Dorsolateral prefrontal cortex (tissue), 120 donors: ENCODE measurements at regions of chr7 and their contacts with region 1.

Region 1: DNA sequence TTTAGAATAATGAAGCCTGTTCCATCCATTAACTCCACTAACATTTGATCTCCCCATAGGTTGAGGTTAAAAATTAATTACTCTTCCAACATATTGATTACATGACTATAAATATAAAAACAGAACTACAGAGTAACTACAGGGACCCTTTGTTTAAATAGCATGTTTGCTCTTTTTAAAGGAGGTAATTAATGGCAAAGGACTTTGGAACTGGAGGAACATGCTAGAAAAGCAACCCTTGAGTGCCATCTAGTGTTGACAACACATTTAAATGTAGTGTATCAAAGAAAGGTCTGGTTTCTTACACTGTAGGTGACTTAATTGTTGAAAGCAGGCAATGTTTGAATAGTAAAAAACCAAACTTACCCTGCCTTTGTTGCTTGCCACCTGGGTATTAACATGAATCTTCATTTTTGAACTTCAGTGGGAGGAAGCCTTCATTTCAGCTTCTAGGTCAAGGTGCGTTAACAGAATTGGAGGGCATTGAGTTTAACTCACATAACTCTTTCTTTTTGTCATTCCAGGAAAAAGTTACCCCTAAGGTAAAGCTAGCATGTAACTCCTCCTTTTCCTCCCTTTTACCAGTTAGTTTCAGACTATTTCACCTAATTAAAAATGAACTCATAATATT is 52.6 kb upstream of the CAPZA2 start:
- DNase-seq: peak in 1 of 10 donors; percentile 14
- H3K4me3 ChIP-seq: no peak overlapping the region
- H3K27ac ChIP-seq: peak overlapping the region in 2 of 59 donors; percentile 19 to 44
- H3K27me3 ChIP-seq: no peaks in the 10 kb centered on the region
- CTCF ChIP-seq: peak; percentile 47 to 94 (median 80)

Region 2: DNA sequence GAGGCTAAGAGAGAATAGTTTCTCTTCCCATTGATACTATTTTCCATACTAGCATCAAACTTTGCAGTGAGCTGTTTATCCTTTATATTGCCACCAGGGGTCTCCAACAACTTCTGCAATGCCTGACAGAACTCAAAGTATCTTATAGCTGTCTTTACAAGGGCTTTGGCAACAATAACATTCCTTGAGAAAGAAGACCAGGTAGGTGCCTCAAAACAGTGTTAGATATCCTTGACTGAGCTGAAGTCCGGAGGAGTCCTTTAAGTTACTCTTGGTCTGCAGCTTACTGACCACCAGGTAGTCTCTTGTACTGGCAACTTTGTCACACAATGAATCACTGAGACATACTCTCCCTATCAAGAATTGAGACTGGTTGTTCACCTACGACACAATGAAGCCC is 629.4 kb before region 1 on chr7:
- intact Hi-C with region 1: loop called in 1 of 2 experiments (anchors 10 kb)
- DNase-seq: no peak
- H3K4me3 ChIP-seq: no peak overlapping the region
- H3K27ac ChIP-seq: no peak overlapping the region
- H3K27me3 ChIP-seq: peaks cover 0 to 2% (median 0%) of the 10 kb centered on the region in 45 donors
- CTCF ChIP-seq: peak in 53 of 56 donors; percentile 30 to 70 (median 48)

Region 3: DNA sequence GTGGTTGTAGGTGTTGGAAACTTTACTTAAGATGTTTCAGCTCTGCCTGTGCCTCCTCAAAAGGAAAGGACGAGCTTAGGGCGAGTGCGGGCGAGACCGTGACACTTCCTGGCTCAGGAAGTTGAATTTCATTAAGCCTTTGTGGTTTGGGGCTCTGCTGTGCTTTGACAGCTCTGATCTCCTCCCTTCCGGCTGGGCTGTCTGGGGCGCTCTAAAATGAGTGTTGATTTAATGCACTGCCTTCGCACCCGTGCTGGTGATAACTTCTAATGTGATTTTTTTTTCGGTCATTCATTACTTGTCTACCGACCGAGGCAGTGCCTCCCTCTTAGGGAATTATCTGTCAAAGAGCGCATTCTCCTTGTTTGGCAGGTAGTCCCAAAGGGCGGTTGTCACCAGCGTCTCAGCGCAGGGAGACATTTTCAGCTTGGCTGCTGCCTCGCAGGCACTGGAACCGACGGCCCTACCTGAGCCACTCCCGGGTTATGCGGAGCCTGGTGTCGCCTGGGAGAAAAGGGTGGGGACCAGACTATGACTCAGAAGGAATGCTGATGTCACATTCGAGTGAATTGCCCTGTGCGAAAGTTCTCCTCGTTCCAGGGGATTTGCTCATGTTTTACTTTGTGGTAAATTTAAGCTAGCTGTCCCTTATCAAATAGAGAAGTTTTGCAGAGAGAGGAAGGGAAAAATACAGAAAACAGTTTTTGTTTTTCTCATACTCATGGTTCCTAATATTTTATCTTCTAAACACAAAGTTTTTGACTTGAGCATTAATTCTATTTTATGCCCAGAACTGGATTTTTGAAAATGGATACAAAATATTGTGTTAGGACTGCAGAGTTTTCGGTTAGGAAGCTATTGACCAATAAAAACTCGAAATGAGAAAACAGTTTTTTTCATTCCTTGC is 598.5 kb before region 1 on chr7:
- intact Hi-C with region 1: no loop called
- DNase-seq: no peak
- H3K4me3 ChIP-seq: peak overlapping the region; percentile 25 to 72 (median 52)
- H3K27ac ChIP-seq: peak overlapping the region in 34 of 59 donors; percentile 4 to 80 (median 46)
- H3K27me3 ChIP-seq: peaks cover 0 to 67% (median 48%) of the 10 kb centered on the region in 45 donors
- CTCF ChIP-seq: no peak

Region 4: GRCh38 chr7:116249708-116250553 is 559.8 kb before region 1 on chr7:
- intact Hi-C with region 1: loop called in 1 of 2 experiments (anchors 5 kb)
- DNase-seq: no peak
- H3K4me3 ChIP-seq: no peak overlapping the region
- H3K27ac ChIP-seq: no peak overlapping the region
- H3K27me3 ChIP-seq: peaks cover 0 to under 1% (median 0%) of the 10 kb centered on the region in 45 donors
- CTCF ChIP-seq: peak in 42 of 56 donors; percentile 10 to 50 (median 29)

Region 5: DNA sequence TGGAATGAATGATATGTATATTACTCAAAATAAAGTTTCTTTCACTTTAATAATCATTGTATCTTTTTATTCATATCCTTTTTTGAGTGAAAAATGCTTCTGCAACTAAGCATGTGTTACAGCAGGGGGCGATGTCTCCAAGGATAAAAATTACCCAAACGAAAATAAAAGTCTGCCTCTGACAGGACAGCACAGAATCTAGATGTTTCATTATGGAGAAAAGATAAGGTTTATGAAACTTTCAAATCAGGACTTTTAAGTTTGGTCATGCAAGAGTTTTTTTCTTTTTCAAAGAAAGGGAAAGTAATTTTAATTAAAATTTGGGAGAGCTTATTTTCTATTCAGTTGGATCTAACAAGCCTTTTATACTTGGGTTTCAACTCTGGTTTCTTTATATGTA is 551.0 kb before region 1 on chr7:
- intact Hi-C with region 1: loop called (anchors 2 to 5 kb)
- DNase-seq: peak in 1 of 10 donors; percentile 18
- H3K4me3 ChIP-seq: no peak overlapping the region
- H3K27ac ChIP-seq: no peak overlapping the region
- H3K27me3 ChIP-seq: peaks cover 0 to 3% (median 0%) of the 10 kb centered on the region in 45 donors
- CTCF ChIP-seq: peak; percentile 85 to 99 (median 93)

Region 6: DNA sequence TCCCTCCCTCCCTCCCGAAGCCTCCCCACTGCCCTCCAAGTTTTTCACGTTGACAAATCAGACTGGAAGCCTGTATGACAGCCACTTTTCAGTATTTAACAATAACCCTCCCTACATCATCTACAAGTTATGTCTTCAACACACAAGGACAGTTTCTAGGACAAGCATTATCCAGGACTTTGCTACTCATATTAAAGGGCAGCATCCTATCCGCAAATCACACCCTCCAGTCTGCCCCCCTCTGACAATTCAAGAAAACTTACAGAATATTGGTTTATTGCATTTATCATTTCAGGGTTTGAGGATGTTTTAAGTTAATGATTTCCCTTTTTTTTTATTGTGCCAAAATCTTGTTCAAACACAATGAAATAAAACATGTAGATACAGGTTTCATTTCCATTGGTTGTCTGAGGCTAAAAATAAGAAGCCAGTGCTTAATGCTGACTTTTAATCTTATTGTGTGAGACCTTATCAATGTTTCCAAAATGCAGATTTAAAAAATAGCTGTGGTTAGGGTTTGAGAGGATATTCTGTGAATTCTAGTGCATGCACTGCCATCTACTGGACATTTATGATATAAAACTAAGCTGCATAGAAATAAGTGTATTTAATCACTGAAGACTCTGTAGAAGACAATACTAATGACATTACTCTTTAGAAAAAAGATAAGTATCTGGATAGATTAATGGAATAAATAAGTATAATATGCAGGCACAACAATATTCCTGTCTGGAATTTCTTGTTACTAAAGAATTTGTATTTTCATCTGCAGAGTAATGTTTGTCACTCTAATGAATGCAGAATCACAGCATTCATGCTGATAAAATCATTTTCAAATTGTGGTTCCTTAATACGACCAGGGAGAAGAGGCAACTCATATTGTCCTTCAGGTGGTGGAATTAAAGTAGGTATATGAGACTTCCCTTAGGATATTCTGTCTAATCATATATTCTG is 220.8 kb before region 1 on chr7:
- intact Hi-C with region 1: loop called in 1 of 2 experiments (anchors 2 kb)
- DNase-seq: no peak
- H3K4me3 ChIP-seq: no peak overlapping the region
- H3K27ac ChIP-seq: peak overlapping the region in 1 of 59 donors; percentile 12
- H3K27me3 ChIP-seq: no peaks in the 10 kb centered on the region
- CTCF ChIP-seq: peak; percentile 73 to 98 (median 85)

Region 7: GRCh38 chr7:116598278-116598677 is 211.5 kb before region 1 on chr7:
- intact Hi-C with region 1: loop called (anchors 2 kb)
- DNase-seq: peak in 6 of 10 donors; percentile 24 to 45 (median 32)
- H3K4me3 ChIP-seq: peak overlapping the region in 4 of 59 donors; percentile 6 to 38 (median 34)
- H3K27ac ChIP-seq: peak overlapping the region in 51 of 59 donors; percentile 3 to 92 (median 70)
- H3K27me3 ChIP-seq: peaks cover 0 to 5% (median 0%) of the 10 kb centered on the region in 45 donors
- CTCF ChIP-seq: peak in 46 of 56 donors; percentile 11 to 69 (median 44)

Region 8: GRCh38 chr7:116772423-116772863 is 37.3 kb before region 1 on chr7:
- intact Hi-C with region 1: no loop called
- DNase-seq: no peak
- H3K4me3 ChIP-seq: no peak overlapping the region
- H3K27ac ChIP-seq: no peak overlapping the region
- H3K27me3 ChIP-seq: peaks cover 0 to 4% (median 0%) of the 10 kb centered on the region in 45 donors
- CTCF ChIP-seq: no peak

Region 9: GRCh38 chr7:116899308-116899707 is 89.6 kb after region 1 on chr7:
- intact Hi-C with region 1: no loop called
- DNase-seq: no peak
- H3K4me3 ChIP-seq: no peak overlapping the region
- H3K27ac ChIP-seq: peak overlapping the region in 10 of 59 donors; percentile 7 to 67 (median 23)
- H3K27me3 ChIP-seq: no peaks in the 10 kb centered on the region
- CTCF ChIP-seq: no peak

Region 10: GRCh38 chr7:116911801-116912200 is 102.0 kb after region 1 on chr7:
- intact Hi-C with region 1: no loop called
- DNase-seq: no peak
- H3K4me3 ChIP-seq: no peak overlapping the region
- H3K27ac ChIP-seq: no peak overlapping the region
- H3K27me3 ChIP-seq: no peaks in the 10 kb centered on the region
- CTCF ChIP-seq: no peak